ENCODE measurements at regions of chr14 and their contacts with region 1.

Region 1: DNA sequence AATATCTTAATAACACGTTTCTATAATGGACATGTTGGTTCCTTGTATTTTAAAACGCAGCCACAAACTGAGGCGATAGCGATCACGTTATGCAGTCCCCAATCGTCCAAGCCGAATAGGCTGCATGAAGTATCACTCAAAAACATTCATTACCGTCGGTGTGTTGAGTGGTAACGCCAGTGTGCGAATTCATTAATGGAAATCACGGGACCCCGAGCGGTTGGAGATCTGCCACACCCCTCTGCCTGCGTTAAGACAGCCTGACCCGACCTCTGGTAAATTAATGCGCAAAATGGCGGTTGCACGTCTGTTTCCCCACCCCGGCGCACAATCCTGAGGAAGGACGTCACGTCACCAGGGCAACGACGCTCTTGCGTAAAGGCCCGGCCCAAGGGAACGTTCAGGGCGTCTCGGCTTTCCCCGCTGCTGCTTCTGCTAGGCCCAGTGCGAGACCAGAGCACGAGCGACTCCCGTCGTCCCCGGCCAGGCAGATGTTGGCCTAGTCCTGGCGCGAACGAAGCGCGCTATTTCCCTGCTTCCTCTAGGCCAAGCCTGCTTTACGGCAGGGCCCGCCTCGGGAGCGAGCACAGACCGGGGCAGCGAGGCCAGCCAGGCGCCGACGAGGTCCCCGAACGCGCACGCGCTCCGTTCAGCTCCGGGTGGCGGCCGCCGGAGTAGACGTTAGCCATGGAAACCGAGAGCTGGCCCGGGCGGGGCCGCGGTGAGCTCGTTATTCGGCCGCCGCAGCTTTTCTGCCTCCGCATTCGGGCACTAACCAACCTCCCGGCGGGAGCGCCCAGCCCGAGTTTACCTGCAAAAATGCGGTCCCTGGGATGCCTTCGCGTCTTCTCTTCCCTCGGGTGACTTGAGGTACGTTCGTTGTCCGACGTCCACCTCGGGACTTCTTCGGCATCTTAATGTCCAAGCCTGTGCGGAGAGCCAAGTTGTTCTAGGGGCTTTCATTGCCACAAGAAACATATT is at the start of gene PCNX4:
- DNase-seq: peak; percentile 88 to 99 (median 94)
- ATAC-seq: peak; percentile 91
- H3K4me3 ChIP-seq: peak within 1 kb of the TSS; percentile 68 to 82
- H3K4me3 Mint-ChIP-seq: peak within 1 kb of the TSS; percentile 94
- H3K27ac ChIP-seq: peak within 1 kb of the TSS; percentile 84 to 97
- H3K27ac Mint-ChIP-seq: peak within 1 kb of the TSS; percentile 99
- H3K4me1 ChIP-seq: peaks cover 24% of the 10 kb centered on the region
- H3K4me1 Mint-ChIP-seq: peaks cover 46% of the 10 kb centered on the region
- H3K27me3 ChIP-seq: no peaks in the 10 kb centered on the region
- H3K27me3 Mint-ChIP-seq: no peaks in the 10 kb centered on the region
- CTCF ChIP-seq: no peak
- total RNA-seq, gene PCNX4: 16.3 to 25.1 TPM

Region 2: DNA sequence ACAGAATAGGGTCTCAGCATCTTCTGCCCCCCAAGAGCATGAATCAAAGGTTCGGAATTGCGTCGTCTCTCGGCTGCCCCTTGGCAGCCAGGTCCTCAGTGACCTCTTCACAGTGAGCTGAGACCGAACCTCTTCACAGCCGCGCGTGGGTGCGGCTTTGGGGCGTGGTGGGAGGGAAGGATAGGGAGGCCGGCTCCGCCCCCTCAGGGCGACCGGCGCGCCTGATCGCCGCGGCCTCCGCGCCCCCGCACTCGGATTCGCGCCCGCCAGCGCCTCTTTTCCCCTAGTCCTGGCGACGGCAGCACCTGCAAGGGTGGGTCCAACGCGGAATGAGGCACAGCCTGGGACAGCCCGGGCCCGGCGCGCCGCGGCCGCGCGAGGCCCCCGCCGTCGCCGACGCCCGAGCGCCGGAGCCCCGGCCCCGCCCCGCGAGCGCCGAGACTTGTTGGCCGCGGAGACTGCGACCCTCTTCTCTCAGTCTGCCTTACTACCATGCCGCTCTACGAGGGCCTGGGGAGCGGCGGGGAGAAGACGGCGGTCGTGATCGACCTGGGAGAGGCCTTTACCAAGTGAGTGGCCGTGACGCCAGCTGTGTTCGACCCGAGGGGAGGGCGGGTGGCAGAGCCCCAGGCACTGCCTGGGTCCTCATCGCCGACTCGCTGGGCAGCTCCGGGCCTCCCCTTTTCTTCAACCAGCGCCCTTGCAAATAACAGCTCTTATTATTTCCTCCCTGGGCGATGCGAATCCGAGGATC is 1891.9 kb before region 1 on chr14 and contains the start of gene ACTR10:
- CTCF ChIA-PET with region 1: no interaction called
- POLR2A ChIA-PET with region 1: no interaction called
- intact Hi-C with region 1: loop called in 1 of 2 experiments (anchors 5 kb)
- DNase-seq: peak; percentile 76 to 95 (median 85)
- ATAC-seq: peak; percentile 87
- H3K4me3 ChIP-seq: peak within 1 kb of the TSS; percentile 75 to 92
- H3K4me3 Mint-ChIP-seq: peak within 1 kb of the TSS; percentile 94
- H3K27ac ChIP-seq: peak within 1 kb of the TSS; percentile 86 to 87
- H3K27ac Mint-ChIP-seq: peak within 1 kb of the TSS; percentile 98
- H3K4me1 ChIP-seq: peaks cover 25% of the 10 kb centered on the region
- H3K4me1 Mint-ChIP-seq: peaks cover 46% of the 10 kb centered on the region
- H3K27me3 ChIP-seq: no peaks in the 10 kb centered on the region
- H3K27me3 Mint-ChIP-seq: no peaks in the 10 kb centered on the region
- CTCF ChIP-seq: no peak
- total RNA-seq, gene ACTR10: 47.5 to 47.7 TPM

Region 3: GRCh38 chr14:59189786-59190771 is 901.8 kb before region 1 on chr14:
- CTCF ChIA-PET with region 1: no interaction called
- POLR2A ChIA-PET with region 1: no interaction called
- intact Hi-C with region 1: loop called (anchors 2 to 5 kb)
- DNase-seq: peak; percentile 37 to 87 (median 66)
- ATAC-seq: no peak
- H3K4me3 ChIP-seq: peak overlapping the region; percentile 63 to 94
- H3K4me3 Mint-ChIP-seq: peak overlapping the region; percentile 98
- H3K27ac ChIP-seq: peak overlapping the region; percentile 76 to 87
- H3K27ac Mint-ChIP-seq: peak overlapping the region; percentile 98
- H3K4me1 ChIP-seq: peaks cover 14% of the 10 kb centered on the region
- H3K4me1 Mint-ChIP-seq: peaks cover 17% of the 10 kb centered on the region
- H3K27me3 ChIP-seq: no peaks in the 10 kb centered on the region
- H3K27me3 Mint-ChIP-seq: no peaks in the 10 kb centered on the region
- CTCF ChIP-seq: no peak

Region 4: GRCh38 chr14:60064491-60065072 is 27.3 kb before region 1 on chr14:
- CTCF ChIA-PET with region 1: interaction called, 4 read pairs
- POLR2A ChIA-PET with region 1: no interaction called
- intact Hi-C with region 1: loop called in 1 of 2 experiments (anchors 2 kb)
- DNase-seq: peak in 2 of 9 experiments; percentile 53 to 66
- ATAC-seq: peak; percentile 80
- H3K4me3 ChIP-seq: no peak overlapping the region
- H3K4me3 Mint-ChIP-seq: no peak overlapping the region
- H3K27ac ChIP-seq: no peak overlapping the region
- H3K27ac Mint-ChIP-seq: no peak overlapping the region
- H3K4me1 ChIP-seq: no peaks in the 10 kb centered on the region
- H3K4me1 Mint-ChIP-seq: no peaks in the 10 kb centered on the region
- H3K27me3 ChIP-seq: no peaks in the 10 kb centered on the region
- H3K27me3 Mint-ChIP-seq: peaks cover 2% of the 10 kb centered on the region
- CTCF ChIP-seq: peak; percentile 71

Region 5: DNA sequence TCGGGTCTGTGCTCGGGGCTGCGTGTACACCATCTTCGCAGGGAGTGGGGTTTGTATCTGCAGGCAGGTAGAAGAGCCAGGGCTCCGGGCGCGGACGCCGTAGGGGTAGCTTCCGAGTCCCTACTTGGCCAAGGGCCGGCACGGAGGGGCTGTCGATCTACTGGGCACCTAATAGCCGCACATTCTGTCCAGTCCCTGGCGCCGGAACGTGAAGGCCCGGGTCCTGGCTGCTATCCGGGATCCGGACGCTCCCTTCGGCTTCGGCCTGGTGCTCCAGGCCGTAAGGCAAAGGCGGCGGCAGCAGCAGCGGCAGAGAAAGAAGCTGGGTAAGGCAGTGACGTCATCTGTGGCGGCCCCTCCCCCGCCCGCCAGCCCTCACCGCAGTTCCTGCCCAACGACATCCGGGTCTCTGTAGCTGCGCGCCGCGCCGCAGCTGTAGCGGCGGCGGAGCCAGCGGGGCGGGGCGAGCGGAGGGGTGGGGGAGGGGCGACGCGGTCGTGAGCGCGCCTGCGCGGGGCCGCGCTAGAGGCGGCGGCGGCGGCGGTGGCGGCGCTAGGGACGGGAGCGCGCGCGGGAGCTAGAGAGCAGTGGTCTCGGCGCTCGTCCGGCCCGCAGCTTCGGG is 157.0 kb after region 1 on chr14 and contains the start of gene PPM1A:
- CTCF ChIA-PET with region 1: no interaction called
- POLR2A ChIA-PET with region 1: interaction called, 23 read pairs
- intact Hi-C with region 1: loop called (anchors 1 kb)
- DNase-seq: peak; percentile 93 to 99 (median 96)
- ATAC-seq: peak; percentile 76
- H3K4me3 ChIP-seq: peak within 1 kb of the TSS; percentile 92
- H3K4me3 Mint-ChIP-seq: peak within 1 kb of the TSS; percentile 93
- H3K27ac ChIP-seq: peak within 1 kb of the TSS; percentile 99 to 100
- H3K27ac Mint-ChIP-seq: peak within 1 kb of the TSS; percentile 100
- H3K4me1 ChIP-seq: peaks cover 41% of the 10 kb centered on the region
- H3K4me1 Mint-ChIP-seq: peaks cover 48% of the 10 kb centered on the region
- H3K27me3 ChIP-seq: no peaks in the 10 kb centered on the region
- H3K27me3 Mint-ChIP-seq: no peaks in the 10 kb centered on the region
- CTCF ChIP-seq: no peak
- total RNA-seq, gene PPM1A: 114 to 115 TPM

Region 6: DNA sequence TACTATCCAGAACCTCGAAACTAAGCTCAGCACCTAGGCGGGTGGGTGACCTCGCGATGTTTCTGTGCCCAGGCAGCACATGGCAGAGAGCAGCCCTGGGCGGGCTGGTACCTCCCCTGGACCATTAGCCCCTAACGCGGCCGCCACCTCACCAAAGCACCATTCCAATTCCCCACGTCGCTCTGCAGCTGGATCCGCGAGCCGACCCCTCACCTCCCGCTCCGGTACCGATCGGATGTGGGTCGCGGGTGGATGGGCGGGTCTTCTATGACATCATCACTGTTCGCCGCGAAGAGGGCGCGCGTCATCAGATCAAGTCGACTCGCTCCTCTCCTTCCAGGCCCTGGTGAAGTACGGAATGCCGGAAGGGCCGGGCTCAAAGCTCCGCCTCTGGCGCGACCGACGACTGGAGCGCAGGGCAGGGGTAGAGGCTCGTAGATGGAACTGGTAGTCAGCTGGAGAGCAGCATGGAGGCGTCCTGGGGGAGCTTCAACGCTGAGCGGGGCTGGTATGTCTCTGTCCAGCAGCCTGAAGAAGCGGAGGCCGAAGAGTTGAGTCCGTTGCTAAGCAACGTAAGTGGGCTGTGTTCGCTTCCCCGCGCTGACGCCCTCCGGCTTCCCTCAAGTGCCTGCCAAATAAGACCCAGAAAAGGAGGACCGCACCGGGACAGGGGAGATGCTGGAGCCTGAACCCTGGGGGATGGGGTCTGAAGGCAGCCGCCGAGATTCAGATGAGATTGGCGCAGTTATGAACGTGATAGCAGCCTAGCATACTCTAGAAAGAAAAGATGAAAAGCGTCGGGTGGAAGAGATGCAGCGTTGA is 889.2 kb after region 1 on chr14 and contains the starts of genes SLC38A6 and TRMT5:
- CTCF ChIA-PET with region 1: no interaction called
- POLR2A ChIA-PET with region 1: no interaction called
- intact Hi-C with region 1: loop called in 1 of 2 experiments (anchors 5 kb)
- DNase-seq: peak; percentile 79 to 94 (median 91)
- ATAC-seq: peak; percentile 88
- H3K4me3 ChIP-seq: peak within 1 kb of the TSS; percentile 94 to 98
- H3K4me3 Mint-ChIP-seq: no peak within 1 kb of the TSS
- H3K27ac ChIP-seq: peak within 1 kb of the TSS; percentile 90 to 92
- H3K27ac Mint-ChIP-seq: no peak within 1 kb of the TSS
- H3K4me1 ChIP-seq: peaks cover 23% of the 10 kb centered on the region
- H3K4me1 Mint-ChIP-seq: peaks cover 25% of the 10 kb centered on the region
- H3K27me3 ChIP-seq: no peaks in the 10 kb centered on the region
- H3K27me3 Mint-ChIP-seq: no peaks in the 10 kb centered on the region
- CTCF ChIP-seq: no peak
- total RNA-seq, gene SLC38A6: 8.3 to 8.5 TPM
- total RNA-seq, gene TRMT5: 1.8 to 1.9 TPM

Region 7: DNA sequence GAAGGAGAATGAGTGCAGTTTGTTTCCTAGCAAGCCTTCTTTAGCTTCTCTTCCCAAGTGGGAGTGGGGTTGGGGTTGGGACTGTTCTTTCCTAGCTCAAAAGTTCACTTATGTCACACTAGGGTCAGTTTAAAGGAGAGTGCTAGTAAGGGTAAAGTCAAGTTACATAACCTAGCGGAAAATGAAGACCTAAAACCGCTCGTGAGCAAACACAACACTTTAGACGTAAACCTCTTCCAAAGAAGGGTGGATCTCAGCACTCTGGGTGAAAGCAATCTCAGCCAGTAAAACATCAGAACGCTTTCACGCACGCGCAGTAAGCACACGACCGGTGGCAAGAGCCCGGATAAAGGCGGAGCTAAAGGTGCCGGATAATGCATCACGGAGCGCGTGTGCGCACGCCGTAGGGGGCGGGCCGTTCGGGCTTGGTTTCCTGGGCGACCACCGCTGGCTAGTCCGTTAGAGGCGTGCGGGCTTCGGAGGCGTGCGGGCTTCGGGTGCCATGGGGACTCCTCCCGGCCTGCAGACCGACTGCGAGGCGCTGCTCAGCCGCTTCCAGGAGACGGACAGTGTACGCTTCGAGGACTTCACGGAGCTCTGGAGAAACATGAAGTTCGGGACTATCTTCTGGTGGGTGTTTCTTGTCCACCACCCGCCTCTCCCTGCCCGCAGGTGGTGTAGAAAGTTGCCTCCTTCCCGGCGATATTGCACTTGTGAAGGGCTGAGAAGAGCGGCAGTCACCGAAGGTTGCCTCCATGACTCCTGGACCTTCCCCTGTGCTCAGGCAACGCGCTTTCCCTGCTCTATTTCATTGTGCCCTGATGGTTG is 1670.3 kb after region 1 on chr14 and contains the start of gene SNAPC1:
- CTCF ChIA-PET with region 1: no interaction called
- POLR2A ChIA-PET with region 1: no interaction called
- intact Hi-C with region 1: loop called (anchors 5 to 10 kb)
- DNase-seq: peak; percentile 96 to 100 (median 98)
- ATAC-seq: peak; percentile 91
- H3K4me3 ChIP-seq: peak within 1 kb of the TSS; percentile 87 to 90
- H3K4me3 Mint-ChIP-seq: peak within 1 kb of the TSS; percentile 98
- H3K27ac ChIP-seq: peak within 1 kb of the TSS; percentile 84 to 95
- H3K27ac Mint-ChIP-seq: peak within 1 kb of the TSS; percentile 100
- H3K4me1 ChIP-seq: peaks cover 31% of the 10 kb centered on the region
- H3K4me1 Mint-ChIP-seq: peaks cover 48% of the 10 kb centered on the region
- H3K27me3 ChIP-seq: no peaks in the 10 kb centered on the region
- H3K27me3 Mint-ChIP-seq: no peaks in the 10 kb centered on the region
- CTCF ChIP-seq: no peak
- total RNA-seq, gene SNAPC1: 6.8 to 7.4 TPM